ENCODE measurements at regions of chr1 and their contacts with region 1.

Region 1: DNA sequence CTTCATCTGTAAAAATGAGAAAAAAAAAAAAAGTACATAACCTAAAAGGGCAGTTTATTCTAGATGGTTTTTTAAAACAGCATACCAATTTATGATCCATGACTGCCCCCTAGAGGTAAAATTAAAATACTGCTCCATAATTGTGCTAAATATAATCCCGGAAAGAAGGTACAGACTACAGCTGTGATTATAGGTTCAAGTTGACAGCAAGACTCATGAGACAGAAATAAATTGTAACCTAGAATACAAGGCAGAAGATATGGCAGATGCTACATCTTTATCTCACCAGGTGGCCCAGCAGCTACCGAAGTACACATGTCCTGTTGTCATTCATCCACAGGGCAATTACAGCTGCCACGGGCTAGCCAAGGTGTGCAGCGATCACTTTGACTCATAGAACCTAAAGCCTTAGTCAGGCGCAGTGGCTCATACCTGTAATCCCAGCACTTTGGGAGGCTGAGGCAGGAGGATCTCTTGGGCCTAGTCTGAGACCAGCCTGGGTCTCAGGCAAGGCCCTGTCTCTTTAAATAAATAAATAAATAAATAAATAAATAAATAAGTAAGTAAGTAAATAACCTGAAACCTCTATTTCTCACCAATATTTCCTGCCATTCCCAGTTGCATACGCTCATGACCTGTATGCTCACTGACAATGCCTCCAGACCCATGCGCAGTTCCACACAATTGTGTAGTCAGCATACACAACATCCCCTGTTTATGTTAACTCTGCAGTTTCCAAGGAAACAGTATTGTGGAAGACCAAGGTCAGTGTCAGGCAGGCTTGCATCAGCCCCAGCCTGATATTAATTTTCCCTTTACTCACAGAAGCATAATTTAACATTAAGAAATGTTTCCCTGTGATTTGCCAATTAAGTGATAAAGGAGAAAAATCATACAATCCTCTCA is 18.3 kb upstream of the PPIE start:
- DNase-seq: peak in 1 of 2 donors; percentile 75
- H3K4me3 ChIP-seq: no peak overlapping the region
- CTCF ChIP-seq: no peak
- POLR2A ChIP-seq: no peak

Region 2: GRCh38 chr1:37846647-37847339 is 1873.6 kb before region 1 on chr1:
- intact Hi-C with region 1: loop called (anchors 10 kb)
- DNase-seq: no peak
- H3K4me3 ChIP-seq: no peak overlapping the region
- CTCF ChIP-seq: no peak
- POLR2A ChIP-seq: no peak

Region 3: DNA sequence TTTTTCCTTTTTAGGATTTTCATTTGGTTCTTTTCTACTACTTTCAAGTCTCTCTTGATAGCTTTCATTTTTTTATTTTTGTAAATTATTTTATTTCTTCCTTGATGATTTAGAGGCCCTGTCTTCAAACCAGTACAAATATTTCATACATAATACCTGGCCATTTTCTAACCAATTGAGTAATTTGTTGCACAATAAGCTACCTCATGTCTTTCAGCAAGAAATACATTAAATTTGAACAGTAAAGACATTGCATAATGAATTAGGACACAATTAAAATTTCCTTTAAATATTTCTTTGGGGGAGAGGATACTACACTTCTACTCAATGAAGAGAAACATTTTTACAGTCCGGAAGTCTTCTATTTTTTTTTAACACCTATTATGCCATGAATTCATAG is 612.3 kb after region 1 on chr1:
- intact Hi-C with region 1: no loop called
- DNase-seq: no peak
- H3K4me3 ChIP-seq: no peak overlapping the region
- CTCF ChIP-seq: no peak
- POLR2A ChIP-seq: no peak

Measured in lower leg skin (tissue), 4 donors.